ENCODE measurements at regions of chr2 and their contacts with region 1.

Region 1: DNA sequence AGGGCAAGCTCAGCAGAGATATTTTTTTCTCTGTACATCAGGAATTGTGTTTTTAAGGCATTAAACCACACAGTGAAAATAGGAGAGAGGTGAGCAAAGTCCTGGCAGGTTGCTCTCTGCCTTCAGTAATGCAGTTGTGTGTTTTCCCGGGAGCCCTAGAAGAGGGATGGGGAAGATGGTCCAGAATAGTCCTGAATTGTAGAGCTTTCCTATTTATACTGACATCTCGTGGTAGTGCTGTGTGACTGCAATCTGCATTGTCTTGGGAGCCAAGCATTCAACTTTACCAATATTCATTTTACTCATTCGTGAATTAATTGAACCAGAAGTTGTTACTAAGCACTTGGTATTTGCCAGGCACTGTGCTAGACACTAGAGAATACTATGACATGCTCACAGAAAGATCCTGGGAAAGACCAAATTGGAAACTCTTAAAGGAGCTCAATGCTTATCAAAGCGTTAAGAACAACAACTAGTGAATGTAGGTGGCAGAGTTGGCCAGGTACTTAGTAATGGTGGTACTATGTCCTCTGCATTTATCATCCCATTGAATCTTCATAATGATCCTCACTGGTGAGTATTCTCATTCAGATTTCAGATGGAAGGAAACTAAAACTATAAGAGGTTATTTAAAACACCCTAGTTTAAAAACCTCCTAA is 214.6 kb downstream of the TRIB2 start:
- DNase-seq: peak in 5 of 7 donors; percentile 17 to 32 (median 20)
- H3K4me3 ChIP-seq: no peak overlapping the region
- H3K27ac ChIP-seq: peak overlapping the region in 2 of 5 donors; percentile 10 to 35
- H3K4me1 ChIP-seq: peaks cover 4 to 19% of the 10 kb centered on the region in 2 donors
- H3K27me3 ChIP-seq: no peaks in the 10 kb centered on the region
- CTCF ChIP-seq: peak; percentile 74 to 89 (median 82)
- POLR2A ChIP-seq: no peak

Region 2: DNA sequence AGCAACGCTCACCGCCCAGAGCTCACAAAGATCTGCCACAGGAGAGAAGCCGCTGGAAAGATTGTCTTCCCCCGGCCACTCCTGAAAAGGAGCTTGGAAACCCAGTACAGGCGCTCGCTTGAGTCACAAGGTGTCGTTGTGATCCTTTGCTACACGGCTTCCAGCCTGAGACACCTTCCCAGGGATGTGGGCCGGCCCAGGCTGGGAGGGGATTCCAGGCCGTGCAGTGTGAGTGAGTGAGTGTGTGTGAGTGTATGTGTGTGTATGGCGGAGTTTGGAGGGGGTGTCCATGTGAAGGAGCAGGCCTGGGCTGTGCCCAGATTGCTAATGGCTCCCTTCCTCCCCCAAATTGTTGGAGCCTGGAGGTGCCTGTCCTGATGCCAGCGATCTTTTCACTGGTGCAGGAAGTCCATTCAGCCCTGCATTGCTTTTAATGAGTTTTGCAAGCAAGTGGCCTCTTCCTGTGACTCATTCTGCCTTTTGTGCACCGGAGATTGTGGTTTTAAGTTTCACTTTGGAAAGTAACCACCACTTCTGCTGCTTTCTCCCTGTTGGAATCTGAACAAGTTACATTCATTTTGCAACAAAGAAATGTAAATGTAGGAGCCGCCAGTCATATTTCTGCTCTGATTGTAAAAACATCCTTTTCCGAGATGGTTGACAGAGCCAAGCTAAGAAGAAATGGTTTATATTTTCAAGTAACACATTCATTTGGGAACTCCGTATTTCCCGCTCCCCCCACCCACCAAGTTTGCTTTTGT is 1101.2 kb before region 1 on chr2:
- intact Hi-C with region 1: loop called in 1 of 2 experiments (anchors 5 kb)
- DNase-seq: peak; percentile 74 to 87 (median 82)
- H3K4me3 ChIP-seq: peak overlapping the region in 2 of 4 donors; percentile 10 to 41
- H3K27ac ChIP-seq: peak overlapping the region; percentile 12 to 90 (median 79)
- H3K4me1 ChIP-seq: peaks cover 21 to 29% of the 10 kb centered on the region in 2 donors
- H3K27me3 ChIP-seq: no peaks in the 10 kb centered on the region
- CTCF ChIP-seq: no peak
- POLR2A ChIP-seq: peak in 1 of 2 donors; percentile 63

Region 3: DNA sequence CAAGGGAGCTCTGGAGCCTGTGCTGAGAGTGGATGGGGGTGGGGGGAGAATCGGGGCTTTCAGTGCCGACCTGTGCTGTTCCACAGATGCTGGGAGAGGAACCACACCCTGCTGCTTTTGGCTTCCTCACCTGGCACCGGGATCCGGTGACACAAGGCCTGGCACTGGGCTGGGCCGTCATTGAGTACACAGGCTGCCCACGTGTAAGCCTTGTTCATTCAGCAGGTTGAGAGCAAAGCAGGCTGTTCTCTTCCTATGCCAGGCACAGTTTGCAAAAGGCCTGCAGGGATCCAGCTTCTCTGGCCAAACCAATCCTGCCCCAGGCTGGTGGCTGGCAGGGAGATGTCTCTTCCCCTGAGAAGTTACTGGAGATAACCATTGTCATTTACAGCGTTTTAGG is 197.5 kb before region 1 on chr2:
- intact Hi-C with region 1: loop called in 1 of 2 experiments (anchors 10 kb)
- DNase-seq: no peak
- H3K4me3 ChIP-seq: no peak overlapping the region
- H3K27ac ChIP-seq: peak overlapping the region in 4 of 5 donors; percentile 27 to 87 (median 57)
- H3K4me1 ChIP-seq: peaks cover 17 to 50% of the 10 kb centered on the region in 2 donors
- H3K27me3 ChIP-seq: no peaks in the 10 kb centered on the region
- CTCF ChIP-seq: no peak
- POLR2A ChIP-seq: no peak

Region 4: DNA sequence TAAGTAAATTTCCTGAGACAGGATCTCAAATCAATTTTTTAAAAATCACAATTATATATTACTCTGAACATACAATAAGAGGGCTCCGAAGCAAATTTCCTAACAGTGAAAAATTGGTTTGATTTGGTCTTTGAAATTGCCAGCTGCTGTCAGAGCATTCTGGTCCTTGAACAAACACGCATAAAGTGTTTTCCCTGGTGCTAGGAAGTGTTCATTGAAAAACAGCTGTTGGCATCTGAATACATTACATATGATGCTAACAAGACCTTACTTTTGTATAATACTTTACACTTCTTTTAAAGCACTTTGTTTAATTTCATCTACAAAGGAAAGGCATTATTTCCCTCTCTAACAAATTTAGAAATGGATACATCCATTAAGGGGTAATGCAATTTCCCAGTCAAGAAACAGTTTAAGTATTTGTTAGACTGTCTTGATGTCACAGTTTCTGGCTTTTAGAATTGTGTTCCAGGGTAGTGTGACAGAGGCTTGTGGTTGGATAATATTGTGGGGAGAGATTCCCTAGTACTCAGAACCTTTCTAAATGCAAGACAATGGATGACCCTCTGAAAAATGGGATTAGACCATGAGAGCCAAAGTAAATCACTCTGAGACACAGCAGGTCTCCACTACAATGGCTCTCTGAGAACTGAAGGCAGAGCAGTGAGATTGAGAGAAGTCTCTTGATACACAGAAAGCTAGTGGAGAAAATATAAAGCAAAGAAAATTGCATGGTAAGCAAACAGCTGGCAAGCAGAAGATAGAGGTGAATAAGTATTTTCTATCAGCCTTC is 84.4 kb after region 1 on chr2:
- intact Hi-C with region 1: no loop called
- DNase-seq: no peak
- H3K4me3 ChIP-seq: no peak overlapping the region
- H3K27ac ChIP-seq: no peak overlapping the region
- H3K4me1 ChIP-seq: no peaks in the 10 kb centered on the region
- H3K27me3 ChIP-seq: peaks cover 10% of the 10 kb centered on the region
- CTCF ChIP-seq: no peak
- POLR2A ChIP-seq: no peak

Measured in adrenal gland (tissue), 19 donors.